Mammary epithelial cell (primary cell): ENCODE measurements at regions of chr16 and their contacts with region 1.

Region 1: DNA sequence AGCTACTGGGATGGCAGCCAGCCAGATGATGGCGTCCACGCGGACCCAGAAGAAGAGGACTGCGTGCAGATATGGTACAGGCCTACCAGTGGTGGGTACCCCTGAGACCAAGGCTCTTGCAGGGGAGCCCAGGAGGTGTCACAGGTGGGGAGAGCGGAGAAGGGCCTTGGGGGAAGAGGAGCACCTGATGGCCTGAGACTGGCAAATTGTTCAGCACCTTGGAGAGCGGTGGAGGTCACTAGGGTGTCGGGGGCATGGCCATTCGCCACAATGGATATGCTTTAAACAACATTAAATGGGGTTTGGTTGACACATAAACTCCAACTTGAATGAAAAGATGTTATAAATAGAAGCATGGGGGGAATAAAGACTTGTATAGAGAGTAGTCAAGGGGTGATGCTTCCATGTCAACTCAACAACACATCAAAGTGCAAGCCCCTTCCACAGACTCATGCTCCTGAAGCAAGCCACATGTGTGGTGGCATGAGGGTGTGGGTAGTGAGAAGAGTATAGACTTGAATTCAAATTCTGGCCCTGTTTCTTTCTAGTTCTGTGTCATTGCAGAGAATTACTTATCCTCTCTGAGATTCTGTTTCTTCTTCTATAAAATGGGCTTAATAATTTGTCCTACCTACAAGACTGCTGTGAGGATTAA is 22.2 kb downstream of the CLEC19A start:
- DNase-seq: no peak
- H3K4me3 ChIP-seq: no peak overlapping the region
- H3K27ac ChIP-seq: no peak overlapping the region
- H3K4me1 ChIP-seq: no peaks in the 10 kb centered on the region
- H3K27me3 ChIP-seq: no peaks in the 10 kb centered on the region
- CTCF ChIP-seq: no peak

Region 2: DNA sequence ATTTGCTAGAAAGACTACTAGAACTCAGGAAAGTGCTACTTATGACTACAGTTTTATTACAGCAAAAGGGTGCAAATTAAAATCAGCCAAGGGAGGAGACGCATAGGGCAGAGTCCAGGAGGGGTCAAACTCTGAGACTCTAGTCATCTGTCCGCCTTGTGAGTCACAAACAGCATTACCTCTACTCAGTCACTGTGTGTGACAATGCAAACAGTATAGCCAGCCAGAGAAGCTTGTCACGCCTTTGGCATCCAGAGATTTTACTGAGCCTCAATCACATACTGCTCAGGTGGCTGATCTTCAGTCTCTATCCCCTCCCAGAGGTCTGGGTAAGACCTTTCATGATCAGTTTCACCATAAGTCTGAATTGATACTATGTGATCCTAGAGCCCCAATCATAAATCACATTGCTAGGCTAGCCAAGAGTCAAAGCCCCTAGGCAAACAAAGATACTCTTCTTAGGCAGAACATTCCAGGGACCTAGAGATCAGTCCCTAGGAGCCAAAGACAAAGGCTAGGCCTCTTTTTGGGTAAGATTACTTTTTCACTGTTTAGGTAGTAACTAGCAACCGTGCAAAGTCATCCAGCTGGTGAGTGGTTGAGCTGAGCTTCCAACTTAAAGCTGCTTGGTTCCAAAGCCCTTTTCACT is 71.0 kb before region 1 on chr16:
- CTCF ChIA-PET with region 1: no interaction called
- dilution Hi-C with region 1: no loop called
- in situ Hi-C with region 1: no loop called
- intact Hi-C with region 1: loop called (anchors 10 kb)
- DNase-seq: no peak
- H3K4me3 ChIP-seq: no peak overlapping the region
- H3K27ac ChIP-seq: no peak overlapping the region
- H3K4me1 ChIP-seq: no peaks in the 10 kb centered on the region
- H3K27me3 ChIP-seq: no peaks in the 10 kb centered on the region
- CTCF ChIP-seq: no peak

Region 3: DNA sequence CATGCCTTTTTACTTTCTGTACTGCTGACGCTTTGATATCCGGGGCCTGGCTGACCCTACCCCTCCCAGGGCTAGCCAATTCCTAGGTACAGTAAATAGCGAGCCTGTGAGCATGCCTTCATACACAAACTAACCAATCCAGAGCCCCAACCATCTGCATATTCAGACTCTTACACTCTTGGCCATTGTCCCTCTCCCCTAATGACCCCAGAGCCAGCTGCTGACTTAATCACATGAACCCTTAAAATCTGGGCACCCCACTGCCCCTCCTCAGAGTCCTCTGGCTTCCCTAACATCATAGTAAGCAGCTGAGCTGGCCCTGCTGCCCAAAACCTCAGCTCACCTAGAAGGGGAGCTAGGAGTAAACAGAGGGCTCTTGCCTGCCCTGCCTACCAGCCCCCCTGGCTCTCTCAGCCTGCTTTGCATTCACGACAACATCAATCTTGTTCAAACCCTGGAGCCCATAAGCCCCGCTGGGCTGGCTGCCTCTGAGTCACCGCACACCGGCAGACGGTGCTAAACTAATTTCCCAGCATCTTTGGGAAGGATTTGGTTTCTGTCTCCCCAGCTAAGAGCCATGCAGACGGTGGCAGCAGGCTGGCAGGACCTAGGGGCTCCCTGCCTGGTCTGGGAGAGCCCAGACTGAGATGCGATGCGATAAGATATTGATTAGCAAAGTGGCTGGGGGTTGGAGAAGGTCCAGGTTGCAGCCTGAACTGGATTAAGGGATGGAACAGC is 41.0 kb after region 1 on chr16:
- CTCF ChIA-PET with region 1: no interaction called
- dilution Hi-C with region 1: no loop called
- in situ Hi-C with region 1: no loop called
- intact Hi-C with region 1: no loop called
- DNase-seq: no peak
- H3K4me3 ChIP-seq: no peak overlapping the region
- H3K27ac ChIP-seq: no peak overlapping the region
- H3K4me1 ChIP-seq: no peaks in the 10 kb centered on the region
- H3K27me3 ChIP-seq: no peaks in the 10 kb centered on the region
- CTCF ChIP-seq: no peak